Naive thymus-derived CD4-positive, alpha-beta T cell (primary cell): ENCODE measurements at regions of chr3 and their contacts with region 1.

Region 1: GRCh38 chr3:46098319-46098761 is 71.1 kb upstream of the XCR1 start:
- DNase-seq: peak in 7 of 9 donors; percentile 30 to 63 (median 52)
- ATAC-seq: peak; percentile 70
- H3K4me3 ChIP-seq: no peak overlapping the region
- H3K4me3 Mint-ChIP-seq: peak overlapping the region; percentile 30 to 80 (median 71)
- H3K27ac ChIP-seq: no peak overlapping the region
- H3K27ac Mint-ChIP-seq: peak overlapping the region; percentile 22 to 98 (median 75)
- H3K4me1 ChIP-seq: peaks cover 25 to 36% of the 10 kb centered on the region in 2 donors
- H3K4me1 Mint-ChIP-seq: peaks cover 28 to 73% (median 35%) of the 10 kb centered on the region in 7 donors
- H3K27me3 ChIP-seq: no peaks in the 10 kb centered on the region
- H3K27me3 Mint-ChIP-seq: peaks cover 0 to 7% (median 0%) of the 10 kb centered on the region in 5 donors

Region 2: GRCh38 chr3:46135475-46135874 is 37.1 kb after region 1 on chr3:
- CTCF ChIA-PET with region 1: no interaction called
- POLR2A ChIA-PET with region 1: no interaction called
- intact Hi-C with region 1: loop called in 1 of 2 experiments (anchors 5 kb)
- DNase-seq: no peak
- ATAC-seq: peak; percentile 73
- H3K4me3 ChIP-seq: no peak overlapping the region
- H3K4me3 Mint-ChIP-seq: no peak overlapping the region
- H3K27ac ChIP-seq: no peak overlapping the region
- H3K27ac Mint-ChIP-seq: no peak overlapping the region
- H3K4me1 ChIP-seq: no peaks in the 10 kb centered on the region
- H3K4me1 Mint-ChIP-seq: peaks cover 0 to 12% (median 3%) of the 10 kb centered on the region in 7 donors
- H3K27me3 ChIP-seq: no peaks in the 10 kb centered on the region
- H3K27me3 Mint-ChIP-seq: peaks cover 0 to 3% (median 0%) of the 10 kb centered on the region in 5 donors

Region 3: DNA sequence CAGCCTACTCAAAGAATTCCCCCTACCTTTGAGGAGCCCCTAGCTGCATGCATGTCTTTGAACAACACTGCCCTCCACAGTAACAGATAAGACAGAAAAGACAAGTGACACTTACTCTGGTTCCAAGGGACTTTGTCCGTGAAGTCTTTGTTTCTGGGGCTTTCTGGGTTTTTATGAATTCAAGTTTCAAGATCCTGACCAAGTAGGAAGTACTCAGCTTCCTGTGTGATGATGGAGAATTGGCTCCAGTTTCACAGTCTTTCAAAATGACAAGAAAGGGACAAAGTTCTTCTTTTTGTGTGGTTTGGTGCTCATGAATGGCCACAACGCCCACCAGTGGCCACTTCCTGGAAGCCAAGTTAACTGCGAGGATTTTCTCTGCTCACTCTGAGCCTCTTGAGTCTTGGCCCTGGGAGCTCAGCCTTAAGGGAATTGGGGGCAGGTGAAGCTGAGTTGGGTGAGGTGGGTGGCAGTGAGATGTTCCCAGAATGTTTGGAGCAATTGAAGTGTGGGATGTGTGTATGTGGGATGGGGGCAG is 109.9 kb after region 1 on chr3 and contains the start of gene CCR1:
- CTCF ChIA-PET with region 1: no interaction called
- POLR2A ChIA-PET with region 1: no interaction called
- intact Hi-C with region 1: loop called (anchors 1 to 5 kb)
- DNase-seq: peak in 2 of 9 donors; percentile 0 to 64
- ATAC-seq: peak; percentile 72
- H3K4me3 ChIP-seq: no peak within 1 kb of the TSS
- H3K4me3 Mint-ChIP-seq: peak within 1 kb of the TSS in 4 of 10 donors; percentile 8 to 72 (median 41)
- H3K27ac ChIP-seq: no peak within 1 kb of the TSS
- H3K27ac Mint-ChIP-seq: peak within 1 kb of the TSS in 8 of 9 donors; percentile 5 to 93 (median 57)
- H3K4me1 ChIP-seq: peaks cover 13 to 44% of the 10 kb centered on the region in 2 donors
- H3K4me1 Mint-ChIP-seq: peaks cover 8 to 64% (median 24%) of the 10 kb centered on the region in 7 donors
- H3K27me3 ChIP-seq: no peaks in the 10 kb centered on the region
- H3K27me3 Mint-ChIP-seq: peaks cover 0 to 2% (median 0%) of the 10 kb centered on the region in 5 donors
- total RNA-seq, gene CCR1: 2.2 to 27.6 (median 4.5) TPM

Region 4: GRCh38 chr3:46214751-46215352 is 116.5 kb after region 1 on chr3:
- CTCF ChIA-PET with region 1: interaction called, 3 read pairs
- POLR2A ChIA-PET with region 1: no interaction called
- intact Hi-C with region 1: loop called in 1 of 2 experiments (anchors 5 kb)
- DNase-seq: no peak
- ATAC-seq: peak; percentile 27
- H3K4me3 ChIP-seq: no peak overlapping the region
- H3K4me3 Mint-ChIP-seq: no peak overlapping the region
- H3K27ac ChIP-seq: no peak overlapping the region
- H3K27ac Mint-ChIP-seq: no peak overlapping the region
- H3K4me1 ChIP-seq: peaks cover 14 to 26% of the 10 kb centered on the region in 2 donors
- H3K4me1 Mint-ChIP-seq: peaks cover 0 to 27% (median 0%) of the 10 kb centered on the region in 7 donors
- H3K27me3 ChIP-seq: no peaks in the 10 kb centered on the region
- H3K27me3 Mint-ChIP-seq: peaks cover 0 to 31% (median 0%) of the 10 kb centered on the region in 5 donors